ENCODE measurements at regions of chr15 and their contacts with region 1.

Region 1: DNA sequence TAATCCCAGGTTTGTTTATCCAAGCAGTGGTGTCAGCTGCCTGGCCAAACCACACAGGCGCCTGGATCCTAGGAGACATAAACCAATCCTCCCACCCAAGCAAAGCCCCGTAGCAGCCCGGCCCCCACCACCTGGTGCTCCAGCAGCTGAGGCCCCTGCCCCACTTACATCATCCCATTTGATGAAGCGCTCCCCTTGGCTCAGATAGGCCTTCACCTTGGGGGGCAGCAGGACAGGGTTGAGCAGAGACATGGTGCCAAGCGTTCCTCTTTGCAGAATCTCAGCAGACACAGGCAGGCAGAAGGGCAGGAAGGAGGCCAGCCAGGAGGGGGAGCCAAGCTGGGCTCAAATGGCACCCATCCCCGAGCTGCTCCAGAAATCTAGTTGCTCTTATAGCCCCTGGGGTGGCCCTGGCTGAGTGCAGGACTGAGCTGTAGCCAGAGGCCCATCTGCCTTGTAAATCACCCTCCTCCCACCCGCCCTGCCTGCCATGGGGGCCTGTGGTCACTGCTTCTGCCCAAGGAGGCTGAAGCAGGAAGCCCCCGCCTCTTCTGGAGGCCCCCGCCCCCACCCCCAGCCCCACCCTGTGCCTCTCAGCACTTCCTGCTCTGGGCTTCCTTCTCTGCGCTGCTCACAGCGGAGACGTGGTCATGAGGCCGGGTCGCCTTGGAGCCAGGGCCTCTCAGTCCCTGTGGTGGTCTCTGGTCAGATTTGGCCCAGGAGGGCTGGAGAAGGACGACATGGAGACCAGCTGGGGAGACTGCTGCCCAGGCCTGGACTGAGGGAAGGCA is at the start of gene PLCB2:
- DNase-seq: peak; percentile 16
- ATAC-seq: peak; percentile 78
- H3K4me3 ChIP-seq: peak within 1 kb of the TSS; percentile 80
- H3K27ac ChIP-seq: peak within 1 kb of the TSS; percentile 78
- H3K4me1 ChIP-seq: peaks cover 12% of the 10 kb centered on the region
- H3K27me3 ChIP-seq: peaks cover 0 to 1% of the 10 kb centered on the region in 2 experiments; a peak in 1 of 4 replicates
- CTCF ChIP-seq: peak; percentile 27 to 46 (median 39); a peak in 5 of 6 replicates
- EP300 ChIP-seq: no peak
- POLR2A ChIP-seq: peak; percentile 87
- RAD21 ChIP-seq: no peak
- polyA plus RNA-seq, gene PLCB2: 1.3 to 2.4 TPM

Region 2: DNA sequence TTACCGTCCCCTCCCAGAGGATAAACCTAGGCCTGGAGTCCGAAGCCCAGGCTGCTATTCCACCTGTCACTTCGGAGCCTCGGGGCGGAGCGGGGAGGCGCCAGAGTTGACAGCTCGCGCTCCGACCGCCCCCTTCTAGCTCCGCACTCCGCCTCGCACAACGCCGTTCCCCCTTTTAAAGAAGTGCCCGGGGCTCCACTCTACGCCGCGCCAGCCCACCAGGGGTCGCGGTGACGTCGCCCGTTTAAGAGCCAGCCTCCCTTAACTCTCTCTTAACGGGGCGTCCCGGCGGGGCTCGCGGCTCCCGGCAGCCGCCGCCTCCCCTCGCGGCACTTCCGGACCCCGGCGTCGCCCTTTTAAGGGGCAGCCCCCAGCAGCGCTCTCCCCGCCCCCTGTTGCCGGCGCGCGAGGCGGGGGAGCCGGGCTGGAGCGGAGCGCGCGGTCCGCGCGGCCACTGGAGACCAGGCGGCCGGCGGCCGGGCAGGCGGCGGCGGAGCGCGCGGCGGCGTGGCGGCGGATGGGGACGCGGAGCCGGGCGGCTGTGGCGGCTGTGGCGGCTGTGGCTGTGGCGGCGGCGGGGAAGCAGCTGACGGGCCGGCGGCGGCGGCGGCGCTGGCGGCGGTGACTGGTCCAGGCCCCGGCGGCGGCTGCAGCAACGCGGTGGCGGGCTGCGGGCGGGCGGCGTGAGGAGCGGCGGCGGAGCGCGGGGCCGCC is 15.8 kb after region 1 on chr15 and contains the start of gene INAFM2:
- CTCF ChIA-PET with region 1: interaction called, 63 read pairs
- POLR2A ChIA-PET with region 1: no interaction called
- RAD21 ChIA-PET with region 1: interaction called, 3 read pairs
- SMC1A ChIA-PET with region 1: interaction called, 6 read pairs
- in situ Hi-C with region 1: no loop called
- intact Hi-C with region 1: no loop called
- DNase-seq: peak; percentile 48
- ATAC-seq: peak; percentile 92
- H3K4me3 ChIP-seq: peak within 1 kb of the TSS; percentile 72
- H3K27ac ChIP-seq: no peak within 1 kb of the TSS
- H3K4me1 ChIP-seq: peaks cover 5% of the 10 kb centered on the region
- H3K27me3 ChIP-seq: no peaks in the 10 kb centered on the region
- CTCF ChIP-seq: peak; percentile 39 to 40 (median 39); a peak in 5 of 6 replicates
- EP300 ChIP-seq: no peak
- POLR2A ChIP-seq: peak; percentile 41; the same call in 1 of the 2 replicates
- RAD21 ChIP-seq: no peak
- polyA plus RNA-seq, gene INAFM2: 2.0 to 2.4 TPM

Region 3: DNA sequence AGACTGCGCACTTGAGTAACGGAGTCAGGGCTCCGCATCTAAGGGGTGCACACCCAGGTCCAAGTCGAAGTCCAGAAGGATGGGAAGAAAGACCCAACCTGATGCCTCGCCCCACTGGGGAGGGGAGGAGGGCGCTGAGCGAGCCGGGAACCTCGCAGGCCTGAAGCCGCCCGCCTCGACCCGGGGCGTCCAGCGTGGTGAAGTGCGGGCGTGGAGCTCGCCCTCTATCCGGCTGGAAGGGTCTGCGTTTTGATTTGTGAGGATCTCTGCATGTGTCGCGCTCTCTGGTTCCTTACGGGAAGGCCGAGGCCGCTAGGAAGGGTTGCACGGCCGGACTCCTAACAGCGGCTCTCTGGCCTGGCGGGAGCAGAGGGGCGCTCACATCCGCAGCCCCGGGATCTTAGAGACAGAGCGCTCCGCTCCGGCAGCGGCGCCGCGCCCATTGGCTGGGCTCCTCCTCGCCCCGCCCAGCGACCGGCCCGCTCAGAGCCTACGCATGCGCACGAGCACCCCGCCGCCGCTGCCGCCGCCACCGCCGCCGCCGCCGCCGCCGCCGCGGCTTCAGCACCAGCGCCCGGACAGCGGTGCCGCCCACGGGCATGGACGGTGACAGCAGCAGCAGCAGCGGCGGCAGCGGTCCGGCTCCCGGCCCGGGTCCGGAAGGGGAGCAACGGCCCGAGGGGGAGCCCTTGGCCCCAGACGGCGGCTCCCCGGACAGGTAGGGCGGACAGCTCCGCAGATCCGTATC is 50.3 kb after region 1 on chr15 and contains the start of gene DISP2:
- CTCF ChIA-PET with region 1: interaction called, 4 read pairs
- POLR2A ChIA-PET with region 1: no interaction called
- RAD21 ChIA-PET with region 1: no interaction called
- SMC1A ChIA-PET with region 1: no interaction called
- in situ Hi-C with region 1: loop called (anchors 5 kb)
- intact Hi-C with region 1: no loop called
- DNase-seq: no peak
- ATAC-seq: peak; percentile 94
- H3K4me3 ChIP-seq: peak within 1 kb of the TSS; percentile 68; the same call in 1 of the 2 replicates
- H3K27ac ChIP-seq: no peak within 1 kb of the TSS
- H3K4me1 ChIP-seq: peaks cover 5% of the 10 kb centered on the region; the same call in 1 of the 2 replicates
- H3K27me3 ChIP-seq: peaks cover 0 to 6% of the 10 kb centered on the region in 2 experiments; a peak in 3 of 4 replicates
- CTCF ChIP-seq: no peak
- EP300 ChIP-seq: no peak
- POLR2A ChIP-seq: no peak; the same call in 1 of the 2 replicates
- RAD21 ChIP-seq: no peak
- polyA plus RNA-seq, gene DISP2: under 0.01 to 0.20 TPM

Region 4: GRCh38 chr15:40367686-40368611 is 60.3 kb after region 1 on chr15:
- CTCF ChIA-PET with region 1: no interaction called
- POLR2A ChIA-PET with region 1: no interaction called
- RAD21 ChIA-PET with region 1: no interaction called
- SMC1A ChIA-PET with region 1: no interaction called
- in situ Hi-C with region 1: no loop called
- intact Hi-C with region 1: no loop called
- DNase-seq: peak; percentile 27
- ATAC-seq: peak; percentile 93
- H3K4me3 ChIP-seq: peak overlapping the region; percentile 2; the same call in 1 of the 2 replicates
- H3K27ac ChIP-seq: no peak overlapping the region
- H3K4me1 ChIP-seq: peaks cover 8% of the 10 kb centered on the region
- H3K27me3 ChIP-seq: peaks cover 3 to 5% of the 10 kb centered on the region in 2 experiments
- CTCF ChIP-seq: peak; percentile 67 to 88 (median 81)
- EP300 ChIP-seq: no peak
- POLR2A ChIP-seq: no peak; the same call in 1 of the 2 replicates
- RAD21 ChIP-seq: peak; percentile 54

Measured in GM12878 (cell line).